ENCODE measurements at regions of chr6 and their contacts with region 1.

Region 1: GRCh38 chr6:52020945-52021570 is 66.4 kb downstream of the PKHD1 start:
- DNase-seq: no peak
- ATAC-seq: no peak

Region 2: DNA sequence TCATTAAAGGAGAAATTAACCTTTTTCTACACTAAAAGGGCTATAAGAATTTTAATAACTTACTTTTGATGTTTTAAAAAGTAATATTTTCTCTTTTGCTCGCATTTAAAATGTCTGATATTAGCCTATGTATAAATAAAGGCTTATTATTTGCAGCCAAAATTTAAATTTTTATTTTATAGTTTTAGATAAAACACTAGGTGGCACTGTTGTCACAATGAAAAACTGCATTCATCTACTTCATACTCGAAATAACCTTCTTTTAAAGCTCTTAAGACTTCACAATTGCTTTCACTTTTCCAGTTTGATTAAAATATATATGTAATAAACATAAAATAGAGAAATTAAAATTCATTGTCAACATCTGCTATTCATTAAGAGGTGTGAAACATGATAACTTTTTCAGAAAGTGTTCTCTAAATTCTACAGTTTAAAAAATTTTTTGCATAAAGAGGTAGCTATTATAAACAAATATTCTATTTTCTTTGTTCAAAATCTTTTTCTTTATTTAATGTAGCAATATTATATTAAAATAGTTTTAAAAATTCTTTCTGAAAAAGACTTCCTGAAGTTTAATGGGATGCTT is 1892.5 kb before region 1 on chr6:
- intact Hi-C with region 1: loop called (anchors 5 kb)
- DNase-seq: no peak
- ATAC-seq: no peak

Region 3: GRCh38 chr6:50816115-50816675 is 1204.9 kb before region 1 on chr6:
- intact Hi-C with region 1: loop called (anchors 5 kb)
- DNase-seq: peak; percentile 49
- ATAC-seq: peak; percentile 65

Measured in Right ventricle myocardium superior (tissue), 1 donor.